ENCODE measurements at regions of chr7 and their contacts with region 1.

Region 1: DNA sequence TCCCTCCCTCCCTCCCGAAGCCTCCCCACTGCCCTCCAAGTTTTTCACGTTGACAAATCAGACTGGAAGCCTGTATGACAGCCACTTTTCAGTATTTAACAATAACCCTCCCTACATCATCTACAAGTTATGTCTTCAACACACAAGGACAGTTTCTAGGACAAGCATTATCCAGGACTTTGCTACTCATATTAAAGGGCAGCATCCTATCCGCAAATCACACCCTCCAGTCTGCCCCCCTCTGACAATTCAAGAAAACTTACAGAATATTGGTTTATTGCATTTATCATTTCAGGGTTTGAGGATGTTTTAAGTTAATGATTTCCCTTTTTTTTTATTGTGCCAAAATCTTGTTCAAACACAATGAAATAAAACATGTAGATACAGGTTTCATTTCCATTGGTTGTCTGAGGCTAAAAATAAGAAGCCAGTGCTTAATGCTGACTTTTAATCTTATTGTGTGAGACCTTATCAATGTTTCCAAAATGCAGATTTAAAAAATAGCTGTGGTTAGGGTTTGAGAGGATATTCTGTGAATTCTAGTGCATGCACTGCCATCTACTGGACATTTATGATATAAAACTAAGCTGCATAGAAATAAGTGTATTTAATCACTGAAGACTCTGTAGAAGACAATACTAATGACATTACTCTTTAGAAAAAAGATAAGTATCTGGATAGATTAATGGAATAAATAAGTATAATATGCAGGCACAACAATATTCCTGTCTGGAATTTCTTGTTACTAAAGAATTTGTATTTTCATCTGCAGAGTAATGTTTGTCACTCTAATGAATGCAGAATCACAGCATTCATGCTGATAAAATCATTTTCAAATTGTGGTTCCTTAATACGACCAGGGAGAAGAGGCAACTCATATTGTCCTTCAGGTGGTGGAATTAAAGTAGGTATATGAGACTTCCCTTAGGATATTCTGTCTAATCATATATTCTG is 64.1 kb downstream of the CAV1 start:
- DNase-seq: no peak
- ATAC-seq: no peak

Region 2: GRCh38 chr7:115734641-115735040 is 854.3 kb before region 1 on chr7:
- intact Hi-C with region 1: no loop called
- DNase-seq: no peak
- ATAC-seq: no peak

Region 3: DNA sequence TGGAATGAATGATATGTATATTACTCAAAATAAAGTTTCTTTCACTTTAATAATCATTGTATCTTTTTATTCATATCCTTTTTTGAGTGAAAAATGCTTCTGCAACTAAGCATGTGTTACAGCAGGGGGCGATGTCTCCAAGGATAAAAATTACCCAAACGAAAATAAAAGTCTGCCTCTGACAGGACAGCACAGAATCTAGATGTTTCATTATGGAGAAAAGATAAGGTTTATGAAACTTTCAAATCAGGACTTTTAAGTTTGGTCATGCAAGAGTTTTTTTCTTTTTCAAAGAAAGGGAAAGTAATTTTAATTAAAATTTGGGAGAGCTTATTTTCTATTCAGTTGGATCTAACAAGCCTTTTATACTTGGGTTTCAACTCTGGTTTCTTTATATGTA is 330.2 kb before region 1 on chr7:
- intact Hi-C with region 1: loop called (anchors 1 kb)
- DNase-seq: no peak
- ATAC-seq: no peak

Region 4: GRCh38 chr7:116438267-116438666 is 150.7 kb before region 1 on chr7:
- intact Hi-C with region 1: loop called (anchors 5 kb)
- DNase-seq: no peak
- ATAC-seq: no peak

Region 5: DNA sequence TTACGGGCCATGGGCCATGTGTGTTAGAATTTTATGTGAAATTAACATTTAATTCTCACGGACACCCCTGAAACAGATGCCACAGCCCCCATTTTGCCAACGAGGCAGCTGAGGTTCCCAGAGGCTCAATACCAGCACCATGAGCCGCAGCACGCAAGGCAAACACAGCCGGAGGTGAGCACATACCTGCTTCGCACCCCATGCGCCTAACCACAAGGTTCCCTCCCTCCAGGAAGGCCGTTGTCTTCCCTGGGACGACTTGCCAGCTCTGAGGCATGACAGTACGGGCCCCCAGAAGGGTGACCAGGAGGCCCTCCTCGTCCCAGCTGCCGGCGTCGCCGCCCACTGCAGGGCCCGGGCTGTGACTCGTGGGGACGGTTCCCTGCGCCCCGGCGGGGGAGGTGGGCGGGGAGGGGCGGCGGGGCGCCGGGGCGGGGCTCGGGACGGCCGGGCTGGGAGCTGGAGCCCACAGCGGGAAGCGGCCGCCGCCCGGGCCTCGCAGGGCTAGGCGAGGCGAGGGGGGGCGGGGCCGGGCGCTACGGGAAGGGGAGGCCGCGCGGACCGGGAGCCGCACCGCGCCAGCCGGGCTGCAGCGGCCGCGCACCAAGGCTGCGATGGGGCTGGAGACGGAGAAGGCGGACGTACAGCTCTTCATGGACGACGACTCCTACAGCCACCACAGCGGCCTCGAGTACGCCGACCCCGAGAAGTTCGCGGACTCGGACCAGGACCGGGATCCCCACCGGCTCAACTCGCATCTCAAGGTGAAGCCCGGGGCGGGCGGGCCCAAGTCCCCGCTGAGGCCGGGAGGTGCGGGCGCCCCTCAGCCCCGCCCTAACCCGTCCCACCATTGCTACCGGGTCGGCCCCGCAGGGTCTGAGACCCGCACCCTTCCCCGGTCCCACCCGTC is 89.5 kb before region 1 on chr7 and contains the start of gene CAV2:
- intact Hi-C with region 1: no loop called
- DNase-seq: peak; percentile 83
- ATAC-seq: peak; percentile 93
- total RNA-seq, gene CAV2: 239 TPM

Region 6: DNA sequence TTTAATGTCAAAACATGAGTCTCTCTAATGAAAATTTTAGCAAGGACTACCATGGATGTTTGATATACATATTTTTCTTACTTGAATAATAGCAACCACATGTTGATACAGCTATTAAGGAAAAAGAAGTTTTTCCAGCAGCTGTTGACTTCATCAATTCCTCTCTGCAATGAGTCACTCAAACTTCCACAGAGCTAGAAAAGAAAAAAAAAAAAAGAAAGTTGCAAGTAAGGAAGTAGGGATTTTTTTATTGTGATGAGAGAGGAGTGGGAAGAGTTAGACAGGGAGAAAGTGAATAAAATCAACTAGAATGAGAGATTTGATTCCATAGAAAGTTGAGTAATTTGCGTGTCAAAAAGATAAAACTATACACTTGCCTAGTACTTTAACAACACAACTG is 17.9 kb before region 1 on chr7:
- intact Hi-C with region 1: no loop called
- DNase-seq: no peak
- ATAC-seq: no peak

Region 7: GRCh38 chr7:116653204-116653603 is 64.3 kb after region 1 on chr7:
- intact Hi-C with region 1: no loop called
- DNase-seq: no peak
- ATAC-seq: peak; percentile 76

Region 8: GRCh38 chr7:116671681-116672595 is 83.0 kb after region 1 on chr7 and contains the start of gene MET:
- intact Hi-C with region 1: loop called (anchors 2 kb)
- DNase-seq: peak; percentile 79
- ATAC-seq: peak; percentile 89
- total RNA-seq, gene MET: 15.9 TPM

Region 9: GRCh38 chr7:117127585-117128168 is 538.8 kb after region 1 on chr7:
- intact Hi-C with region 1: loop called (anchors 10 kb)
- DNase-seq: no peak
- ATAC-seq: no peak